Right cardiac atrium (tissue), 5 donors: ENCODE measurements at regions of chr10 and their contacts with region 1.

Region 1: GRCh38 chr10:127906548-127907377 is at the start of gene PTPRE:
- DNase-seq: peak; percentile 79 to 91 (median 90)
- ATAC-seq: peak; percentile 87 to 93
- H3K4me3 ChIP-seq: peak within 1 kb of the TSS; percentile 74
- H3K27ac ChIP-seq: peak within 1 kb of the TSS; percentile 55
- H3K4me1 ChIP-seq: peaks cover 8% of the 10 kb centered on the region
- H3K27me3 ChIP-seq: no peaks in the 10 kb centered on the region
- total RNA-seq, gene PTPRE: 11.2 to 21.1 (median 13.8) TPM

Region 2: DNA sequence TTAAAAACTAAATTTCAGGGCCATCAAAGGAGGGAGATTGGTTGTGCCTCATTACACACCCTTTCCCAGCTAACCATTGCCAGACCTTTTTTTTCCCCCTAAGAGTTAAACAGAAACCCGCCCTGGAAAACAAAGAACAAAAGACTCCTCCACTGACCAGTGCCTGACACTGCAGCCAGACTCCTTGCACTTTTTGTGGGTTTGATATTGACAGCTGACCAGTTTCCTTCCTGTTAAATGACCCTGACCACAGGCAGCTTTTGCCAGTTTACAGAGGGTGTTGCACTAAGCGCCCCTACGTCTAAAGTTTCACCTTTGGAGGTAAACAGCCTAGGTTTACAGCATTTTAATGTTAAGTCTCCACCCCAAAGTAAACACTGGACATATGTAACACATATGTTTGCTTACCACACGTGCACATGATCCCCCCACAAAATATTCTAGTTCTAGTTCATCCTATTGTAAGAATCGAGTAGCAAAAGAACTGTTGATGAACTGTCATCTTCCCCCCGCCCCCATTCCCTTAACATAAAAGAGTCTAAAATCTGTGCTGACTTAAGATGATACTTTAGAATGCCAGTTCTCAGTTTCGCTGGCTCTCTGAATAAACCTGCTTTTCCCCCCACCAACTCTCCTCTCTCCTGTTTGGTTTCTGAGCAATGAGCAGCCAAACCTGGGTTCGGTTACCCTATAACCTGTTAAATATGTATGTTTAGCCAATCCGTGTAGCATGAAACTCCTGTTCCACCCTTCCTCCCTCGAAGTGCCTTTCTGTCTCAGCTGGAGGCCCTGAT is 131.8 kb before region 1 on chr10:
- intact Hi-C with region 1: no loop called
- DNase-seq: no peak
- ATAC-seq: peak in 1 of 2 donors; percentile 58
- H3K4me3 ChIP-seq: no peak overlapping the region
- H3K27ac ChIP-seq: no peak overlapping the region
- H3K4me1 ChIP-seq: no peaks in the 10 kb centered on the region
- H3K27me3 ChIP-seq: no peaks in the 10 kb centered on the region

Region 3: GRCh38 chr10:128011175-128011979 is 104.6 kb after region 1 on chr10:
- intact Hi-C with region 1: loop called (anchors 1 to 2 kb)
- DNase-seq: peak; percentile 80 to 93 (median 92)
- ATAC-seq: peak; percentile 86 to 92
- H3K4me3 ChIP-seq: no peak overlapping the region
- H3K27ac ChIP-seq: no peak overlapping the region
- H3K4me1 ChIP-seq: no peaks in the 10 kb centered on the region
- H3K27me3 ChIP-seq: no peaks in the 10 kb centered on the region

Region 4: DNA sequence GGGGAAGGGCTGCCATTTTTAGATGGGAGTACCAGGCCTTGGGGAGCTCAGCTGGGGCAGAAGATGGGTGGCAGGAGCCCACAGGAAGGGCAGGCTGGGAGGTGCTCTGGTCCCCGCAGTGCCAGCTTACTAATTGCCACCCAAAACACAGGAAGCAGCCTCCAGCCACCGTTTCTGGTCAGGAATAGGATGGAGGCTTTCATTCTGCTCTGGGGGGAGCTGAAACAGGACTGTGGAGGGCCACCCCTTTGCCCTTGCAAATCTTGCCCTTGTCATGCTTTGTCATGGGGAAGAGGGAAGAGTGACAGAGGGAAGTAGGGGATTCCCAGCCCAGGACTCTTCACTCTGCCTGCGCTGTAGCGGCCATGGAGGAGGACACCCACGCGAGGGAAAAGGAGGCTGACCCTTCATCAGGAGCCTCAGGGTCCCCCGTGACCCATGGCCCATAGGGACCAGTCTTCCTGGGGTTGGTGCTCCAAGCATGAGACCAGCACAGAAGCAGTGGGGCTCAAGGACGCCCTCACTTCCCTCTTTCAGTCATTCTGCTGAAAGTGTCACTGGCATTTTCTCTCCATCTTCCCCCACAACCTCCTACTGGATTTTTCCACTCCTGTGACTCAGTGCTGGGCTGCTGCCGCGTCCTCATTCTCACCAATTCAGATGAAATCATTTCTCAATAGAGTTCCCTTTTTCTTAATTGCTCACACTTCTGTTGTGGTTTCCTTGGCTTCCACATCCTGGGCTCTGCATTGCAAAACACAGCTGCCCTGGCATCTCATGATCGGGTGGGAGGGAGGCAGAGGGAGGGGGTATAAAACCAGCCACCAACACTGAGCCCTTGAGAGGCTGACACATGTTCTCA is 157.6 kb after region 1 on chr10:
- intact Hi-C with region 1: loop called (anchors 2 to 10 kb)
- DNase-seq: peak; percentile 59 to 75 (median 75)
- ATAC-seq: peak; percentile 59 to 61
- H3K4me3 ChIP-seq: no peak overlapping the region
- H3K27ac ChIP-seq: peak overlapping the region; percentile 65
- H3K4me1 ChIP-seq: peaks cover 6% of the 10 kb centered on the region
- H3K27me3 ChIP-seq: no peaks in the 10 kb centered on the region

Region 5: GRCh38 chr10:128087884-128088709 is 181.3 kb after region 1 on chr10:
- intact Hi-C with region 1: no loop called
- DNase-seq: no peak
- ATAC-seq: no peak
- H3K4me3 ChIP-seq: no peak overlapping the region
- H3K27ac ChIP-seq: no peak overlapping the region
- H3K4me1 ChIP-seq: no peaks in the 10 kb centered on the region
- H3K27me3 ChIP-seq: no peaks in the 10 kb centered on the region